ENCODE measurements at regions of chr18 and their contacts with region 1.

Region 1: GRCh38 chr18:59459369-59460079 is 100.5 kb upstream of the LMAN1 start:
- DNase-seq: no peak
- ATAC-seq: peak in 5 of 8 donors; percentile 39 to 66 (median 50)
- H3K4me3 ChIP-seq: no peak overlapping the region
- H3K27ac ChIP-seq: no peak overlapping the region
- H3K4me1 ChIP-seq: peaks cover 0 to 22% (median 7%) of the 10 kb centered on the region in 9 donors
- H3K27me3 ChIP-seq: peaks cover 0 to 5% (median 0%) of the 10 kb centered on the region in 7 donors
- CTCF ChIP-seq: peak; percentile 26 to 75 (median 63)

Region 2: GRCh38 chr18:59547581-59548182 is 88.2 kb after region 1 on chr18:
- intact Hi-C with region 1: loop called in 1 of 10 experiments (anchors 2 kb)
- DNase-seq: no peak
- ATAC-seq: peak in 3 of 8 donors; percentile 32 to 61 (median 50)
- H3K4me3 ChIP-seq: no peak overlapping the region
- H3K27ac ChIP-seq: peak overlapping the region in 1 of 10 donors; percentile 10
- H3K4me1 ChIP-seq: peaks cover 0 to 18% (median 9%) of the 10 kb centered on the region in 9 donors
- H3K27me3 ChIP-seq: no peaks in the 10 kb centered on the region
- CTCF ChIP-seq: no peak

Region 3: DNA sequence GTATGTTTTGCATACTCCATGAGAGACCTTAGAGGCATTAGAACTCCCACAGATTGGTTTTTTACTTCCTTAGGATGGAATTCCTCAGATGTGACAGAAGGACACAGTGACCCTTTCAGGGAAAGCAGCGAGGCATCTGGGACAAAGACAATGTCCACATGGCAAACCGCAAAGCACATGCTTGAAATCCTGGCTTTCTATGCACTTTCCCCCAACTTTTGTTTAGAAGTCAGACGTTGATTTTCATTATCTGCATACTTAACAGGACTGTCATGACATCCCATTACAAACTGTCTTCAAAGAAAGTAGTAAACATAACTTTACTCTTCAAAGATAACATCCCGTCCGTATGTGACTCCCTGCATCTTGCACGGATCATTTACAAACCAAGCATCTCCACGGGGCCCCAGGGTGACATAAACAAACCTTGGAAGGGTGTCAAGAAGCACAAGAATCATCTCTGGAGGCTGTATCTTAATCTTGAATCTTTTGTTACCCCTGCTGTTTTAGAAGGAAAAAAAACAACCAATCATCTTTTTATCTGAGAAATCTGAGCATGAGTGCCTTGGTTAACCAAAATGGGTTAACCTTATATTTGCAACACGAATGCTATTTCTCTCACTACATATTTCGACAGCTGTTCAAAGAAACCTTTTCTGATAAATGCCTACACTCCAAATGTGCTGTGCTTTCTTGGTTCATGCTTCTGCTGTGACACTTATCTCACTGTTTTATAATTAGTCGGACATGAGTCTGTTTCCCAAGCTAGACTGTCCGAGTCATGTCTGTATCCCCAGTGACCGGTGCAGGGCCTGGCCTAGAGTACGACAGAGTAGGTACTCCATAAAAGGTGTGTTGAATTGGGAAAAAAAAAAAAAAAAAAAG is 146.9 kb after region 1 on chr18:
- intact Hi-C with region 1: loop called in 1 of 10 experiments (anchors 10 kb)
- DNase-seq: peak in 1 of 2 donors; percentile 17
- ATAC-seq: peak; percentile 62 to 95 (median 88)
- H3K4me3 ChIP-seq: no peak overlapping the region
- H3K27ac ChIP-seq: peak overlapping the region in 4 of 10 donors; percentile 7 to 43 (median 18)
- H3K4me1 ChIP-seq: peaks cover 2 to 29% (median 15%) of the 10 kb centered on the region in 9 donors
- H3K27me3 ChIP-seq: no peaks in the 10 kb centered on the region
- CTCF ChIP-seq: no peak

Region 4: GRCh38 chr18:59631583-59632181 is 172.2 kb after region 1 on chr18:
- intact Hi-C with region 1: loop called in 3 of 10 experiments (anchors 5 to 10 kb)
- DNase-seq: no peak
- ATAC-seq: no peak
- H3K4me3 ChIP-seq: no peak overlapping the region
- H3K27ac ChIP-seq: no peak overlapping the region
- H3K4me1 ChIP-seq: peaks cover 0 to 18% (median 0%) of the 10 kb centered on the region in 9 donors
- H3K27me3 ChIP-seq: no peaks in the 10 kb centered on the region
- CTCF ChIP-seq: peak; percentile 6 to 62 (median 53)

Region 5: DNA sequence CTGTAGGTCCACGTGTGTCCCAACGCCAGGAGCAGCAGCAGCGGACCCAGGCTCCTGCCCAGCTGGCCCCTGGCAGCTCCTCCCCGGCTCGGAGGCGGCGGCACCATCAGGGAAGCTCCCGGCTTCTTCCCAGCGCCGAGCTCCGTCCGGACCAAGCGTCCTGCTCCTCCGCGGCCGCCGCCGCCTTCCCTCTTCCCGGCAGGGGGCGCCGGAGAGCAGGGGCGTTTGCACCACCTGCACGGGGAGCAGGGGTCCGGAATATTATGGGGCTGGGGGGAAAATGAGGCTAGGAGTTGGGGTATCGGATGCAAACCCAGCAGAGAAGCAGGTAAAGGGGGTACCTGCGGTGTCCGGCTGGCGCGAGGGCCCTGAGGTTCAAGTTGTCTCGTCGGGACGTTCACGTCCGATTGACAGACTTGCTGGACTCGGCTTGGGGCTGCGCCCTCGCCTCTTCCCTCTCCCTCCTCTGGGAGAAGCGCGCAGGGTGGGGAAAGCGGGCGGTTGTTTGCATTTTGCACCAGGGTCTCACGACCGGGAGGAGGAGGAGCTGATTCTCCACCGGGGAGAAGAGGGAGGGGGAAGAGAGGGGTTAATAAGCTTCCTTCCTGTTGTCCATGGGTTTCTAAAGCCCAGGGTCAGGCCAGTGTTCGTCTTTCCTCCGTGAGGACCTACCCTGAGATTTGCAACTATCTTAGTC is 237.9 kb after region 1 on chr18 and contains the start of gene CCBE1:
- intact Hi-C with region 1: loop called in 3 of 10 experiments (anchors 5 to 10 kb)
- DNase-seq: peak; percentile 15 to 80
- ATAC-seq: peak; percentile 77 to 92 (median 86)
- H3K4me3 ChIP-seq: peak within 1 kb of the TSS; percentile 9 to 69 (median 49)
- H3K27ac ChIP-seq: peak within 1 kb of the TSS in 3 of 10 donors; percentile 6 to 41 (median 12)
- H3K4me1 ChIP-seq: peaks cover 4 to 25% (median 12%) of the 10 kb centered on the region in 9 donors
- H3K27me3 ChIP-seq: peaks cover 8 to 66% (median 45%) of the 10 kb centered on the region in 7 donors
- CTCF ChIP-seq: peak; percentile 67 to 87 (median 76)
- total RNA-seq, gene CCBE1: 0.24 to 10.3 (median 2.2) TPM

Measured in heart right ventricle (tissue), 16 donors.